T-cell (primary cell): ENCODE measurements at regions of chr2 and their contacts with region 1.

Region 1: DNA sequence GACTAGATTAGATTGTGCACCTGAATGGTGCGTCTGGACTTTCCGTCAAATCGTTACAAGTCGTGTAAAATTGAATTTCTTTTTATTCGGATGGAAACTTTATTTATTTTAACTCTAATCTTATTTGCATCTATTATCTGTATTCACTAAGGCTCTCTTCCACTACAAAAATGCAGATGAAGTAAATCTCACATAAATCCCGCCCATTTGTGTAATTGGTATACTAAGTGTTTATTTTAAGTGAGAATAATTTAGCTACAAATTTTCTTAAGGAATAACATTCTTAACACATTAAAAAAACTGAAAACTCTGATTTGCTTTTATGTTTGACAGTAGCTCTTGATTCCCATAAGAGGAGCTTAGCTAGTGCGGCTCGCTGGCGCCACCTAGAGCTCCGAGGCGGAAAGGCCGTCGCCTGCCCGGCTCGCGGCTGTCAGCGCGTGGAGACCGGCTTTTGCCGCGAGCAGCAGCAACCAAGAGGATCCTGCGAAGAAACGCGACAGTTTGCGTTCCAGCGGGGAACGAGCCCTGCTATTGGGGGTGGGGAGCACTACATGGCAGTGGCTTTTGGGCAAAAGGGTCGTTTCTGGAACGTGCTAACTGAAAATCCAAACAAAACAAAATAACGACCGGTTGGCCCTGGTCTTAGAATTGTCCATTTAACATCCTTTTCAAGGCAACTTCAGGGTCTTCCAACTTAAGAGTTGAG is 6.7 kb downstream of the SP9 start:
- DNase-seq: peak; percentile 74 to 93 (median 85)
- ATAC-seq: peak; percentile 72 to 79 (median 74)
- H3K4me3 ChIP-seq: peak overlapping the region in 1 of 2 donors; percentile 44
- H3K4me3 Mint-ChIP-seq: peak overlapping the region; percentile 42 to 69 (median 63)
- H3K27ac ChIP-seq: no peak overlapping the region
- H3K27ac Mint-ChIP-seq: peak overlapping the region in 1 of 2 donors; percentile 86
- H3K4me1 ChIP-seq: peaks cover 15 to 54% of the 10 kb centered on the region in 2 experiments
- H3K4me1 Mint-ChIP-seq: peaks cover 37 to 47% (median 44%) of the 10 kb centered on the region in 3 donors
- H3K27me3 ChIP-seq: peaks cover 33 to 67% of the 10 kb centered on the region in 2 experiments
- H3K27me3 Mint-ChIP-seq: peaks cover 57 to 62% of the 10 kb centered on the region in 2 donors

Region 2: GRCh38 chr2:173027181-173028128 is 1314.0 kb before region 1 on chr2:
- CTCF ChIA-PET with region 1: interaction called in 1 of 2 experiments, 22 read pairs
- POLR2A ChIA-PET with region 1: no interaction called
- DNase-seq: peak; percentile 24 to 89 (median 60)
- ATAC-seq: peak; percentile 62 to 72 (median 68)
- H3K4me3 ChIP-seq: no peak overlapping the region
- H3K4me3 Mint-ChIP-seq: no peak overlapping the region
- H3K27ac ChIP-seq: no peak overlapping the region
- H3K27ac Mint-ChIP-seq: no peak overlapping the region
- H3K4me1 ChIP-seq: no peaks in the 10 kb centered on the region
- H3K4me1 Mint-ChIP-seq: peaks cover 0 to 7% (median 2%) of the 10 kb centered on the region in 3 donors
- H3K27me3 ChIP-seq: no peaks in the 10 kb centered on the region
- H3K27me3 Mint-ChIP-seq: peaks cover 5 to 17% of the 10 kb centered on the region in 2 donors

Region 3: GRCh38 chr2:173402405-173402974 is 939.0 kb before region 1 on chr2:
- CTCF ChIA-PET with region 1: interaction called, 19 to 85 read pairs
- POLR2A ChIA-PET with region 1: no interaction called
- DNase-seq: peak; percentile 16 to 81 (median 57)
- ATAC-seq: peak; percentile 85 to 88 (median 88)
- H3K4me3 ChIP-seq: peak overlapping the region in 1 of 2 donors; percentile 25
- H3K4me3 Mint-ChIP-seq: no peak overlapping the region
- H3K27ac ChIP-seq: no peak overlapping the region
- H3K27ac Mint-ChIP-seq: no peak overlapping the region
- H3K4me1 ChIP-seq: peaks cover 0 to 6% of the 10 kb centered on the region in 2 experiments
- H3K4me1 Mint-ChIP-seq: peaks cover 4 to 11% (median 5%) of the 10 kb centered on the region in 3 donors
- H3K27me3 ChIP-seq: peaks cover 6 to 18% of the 10 kb centered on the region in 2 experiments
- H3K27me3 Mint-ChIP-seq: peaks cover 53 to 58% of the 10 kb centered on the region in 2 donors

Region 4: GRCh38 chr2:174248187-174248997 is 93.0 kb before region 1 on chr2 and contains the start of gene OLA1:
- CTCF ChIA-PET with region 1: interaction called in 1 of 2 experiments, 14 read pairs
- POLR2A ChIA-PET with region 1: no interaction called
- DNase-seq: peak; percentile 81 to 98 (median 92)
- ATAC-seq: peak; percentile 95 to 99 (median 96)
- H3K4me3 ChIP-seq: peak within 1 kb of the TSS; percentile 64 to 87
- H3K4me3 Mint-ChIP-seq: peak within 1 kb of the TSS; percentile 81 to 88 (median 87)
- H3K27ac ChIP-seq: peak within 1 kb of the TSS; percentile 69
- H3K27ac Mint-ChIP-seq: peak within 1 kb of the TSS; percentile 55 to 71
- H3K4me1 ChIP-seq: peaks cover 5 to 19% of the 10 kb centered on the region in 2 experiments
- H3K4me1 Mint-ChIP-seq: peaks cover 26 to 32% (median 31%) of the 10 kb centered on the region in 3 donors
- H3K27me3 ChIP-seq: no peaks in the 10 kb centered on the region
- H3K27me3 Mint-ChIP-seq: no peaks in the 10 kb centered on the region
- total RNA-seq, gene OLA1: 32.1 to 46.1 (median 38.1) TPM

Region 5: GRCh38 chr2:174326161-174327020 is 15.0 kb before region 1 on chr2:
- CTCF ChIA-PET with region 1: interaction called, 6 to 15 read pairs
- POLR2A ChIA-PET with region 1: no interaction called
- DNase-seq: peak in 5 of 35 experiments; percentile 9 to 52 (median 21)
- ATAC-seq: peak; percentile 39 to 72 (median 50)
- H3K4me3 ChIP-seq: peak overlapping the region; percentile 32 to 83
- H3K4me3 Mint-ChIP-seq: peak overlapping the region; percentile 65 to 84 (median 73)
- H3K27ac ChIP-seq: no peak overlapping the region
- H3K27ac Mint-ChIP-seq: peak overlapping the region in 1 of 2 donors; percentile 67
- H3K4me1 ChIP-seq: peaks cover 6 to 32% of the 10 kb centered on the region in 2 experiments
- H3K4me1 Mint-ChIP-seq: peaks cover 30 to 34% (median 33%) of the 10 kb centered on the region in 3 donors
- H3K27me3 ChIP-seq: peaks cover 33 to 63% of the 10 kb centered on the region in 2 experiments
- H3K27me3 Mint-ChIP-seq: peaks cover 70 to 90% of the 10 kb centered on the region in 2 donors